ENCODE measurements at regions of chr1 and their contacts with region 1.

Region 1: DNA sequence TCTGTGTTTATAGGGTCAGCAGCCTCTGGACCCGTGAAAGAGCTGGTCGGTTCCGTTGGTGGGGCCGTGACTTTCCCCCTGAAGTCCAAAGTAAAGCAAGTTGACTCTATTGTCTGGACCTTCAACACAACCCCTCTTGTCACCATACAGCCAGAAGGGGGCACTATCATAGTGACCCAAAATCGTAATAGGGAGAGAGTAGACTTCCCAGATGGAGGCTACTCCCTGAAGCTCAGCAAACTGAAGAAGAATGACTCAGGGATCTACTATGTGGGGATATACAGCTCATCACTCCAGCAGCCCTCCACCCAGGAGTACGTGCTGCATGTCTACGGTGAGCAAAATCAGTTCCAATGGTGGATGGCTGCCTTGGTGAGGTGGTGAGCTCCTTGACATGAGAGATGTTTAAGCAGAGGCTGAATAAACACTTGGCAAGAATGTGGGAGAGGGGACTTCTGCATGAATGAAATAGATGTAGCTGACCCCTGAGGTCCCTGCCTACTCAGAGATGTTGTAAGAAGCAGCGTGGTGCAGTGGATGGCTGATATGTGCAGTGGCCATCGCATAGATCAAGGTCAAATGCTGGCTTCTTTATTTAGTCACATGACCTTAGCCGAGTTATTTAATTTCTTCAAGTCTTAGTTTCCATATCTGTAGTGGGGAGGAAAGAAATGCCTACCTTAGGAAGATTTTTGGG is 9.3 kb downstream of the SLAMF7 start:
- DNase-seq: no peak
- H3K4me3 Mint-ChIP-seq: no peak overlapping the region
- H3K27ac Mint-ChIP-seq: no peak overlapping the region
- H3K4me1 Mint-ChIP-seq: peaks cover 84% of the 10 kb centered on the region
- H3K27me3 Mint-ChIP-seq: no peaks in the 10 kb centered on the region

Region 2: DNA sequence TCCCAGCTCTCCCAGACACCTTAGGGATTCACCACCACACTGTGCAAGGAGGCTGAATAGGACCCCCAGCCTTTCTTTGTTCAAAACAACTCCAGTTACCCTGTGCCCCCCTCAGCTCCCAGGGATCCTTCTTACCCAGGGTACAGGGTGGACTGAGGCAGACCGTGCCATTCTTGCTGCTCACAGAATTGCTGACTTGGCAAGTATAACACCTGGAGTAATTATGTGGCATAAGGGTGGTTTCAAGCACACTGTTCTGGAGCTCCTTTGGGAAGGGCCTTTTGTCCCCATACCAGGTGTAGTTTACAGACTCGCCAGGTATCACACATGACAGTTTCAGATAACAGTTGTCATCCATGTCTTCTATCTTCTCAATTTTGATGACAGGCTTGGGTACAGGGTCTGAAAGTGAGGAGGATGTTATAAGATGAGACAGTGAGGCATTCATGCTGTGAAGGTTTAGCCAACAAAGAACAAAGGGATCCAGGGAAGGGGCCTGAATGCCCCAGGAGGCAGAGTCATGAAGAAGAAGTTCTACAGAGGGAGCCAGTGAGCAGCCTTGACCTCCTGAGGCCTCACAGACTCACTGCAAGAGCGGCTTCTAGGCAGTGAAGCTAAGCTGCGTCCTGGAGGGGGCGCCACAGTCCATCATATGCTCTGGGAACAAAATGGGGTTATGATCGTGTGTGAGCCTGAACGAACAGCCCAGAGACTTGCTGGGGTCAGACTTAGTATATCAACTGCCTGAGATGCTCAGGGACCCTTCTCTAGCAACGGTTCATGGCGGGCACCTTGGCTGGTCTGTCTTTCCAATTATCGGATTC is 67.0 kb before region 1 on chr1:
- CTCF ChIA-PET with region 1: interaction called, 11 read pairs
- POLR2A ChIA-PET with region 1: no interaction called
- DNase-seq: peak; percentile 90
- H3K4me3 Mint-ChIP-seq: no peak overlapping the region
- H3K27ac Mint-ChIP-seq: peak overlapping the region; percentile 91
- H3K4me1 Mint-ChIP-seq: peaks cover 71% of the 10 kb centered on the region
- H3K27me3 Mint-ChIP-seq: no peaks in the 10 kb centered on the region

Measured in activated CD4-positive, alpha-beta T cell treated with anti-CD3 and anti-CD28 coated beads, Interleukin-2, amount 10 ng/mL, durations not matched to agents 7 days and 5 days (primary cell).